Activated CD4-positive, alpha-beta T cell treated with anti-CD3 and anti-CD28 coated beads for 36 hours (primary cell): ENCODE measurements at regions of chr6 and their contacts with region 1.

Region 1: GRCh38 chr6:107977283-107977682 is 19.3 kb upstream of the SEC63 start:
- DNase-seq: no peak
- ATAC-seq: no peak
- H3K4me3 Mint-ChIP-seq: no peak overlapping the region
- H3K27ac Mint-ChIP-seq: no peak overlapping the region
- H3K4me1 Mint-ChIP-seq: no peaks in the 10 kb centered on the region
- H3K27me3 Mint-ChIP-seq: no peaks in the 10 kb centered on the region

Region 2: GRCh38 chr6:108526739-108527174 is 549.5 kb after region 1 on chr6:
- CTCF ChIA-PET with region 1: interaction called, 3 read pairs
- POLR2A ChIA-PET with region 1: no interaction called
- intact Hi-C with region 1: loop called (anchors 2 to 10 kb)
- DNase-seq: no peak
- ATAC-seq: no peak
- H3K4me3 Mint-ChIP-seq: no peak overlapping the region
- H3K27ac Mint-ChIP-seq: no peak overlapping the region
- H3K4me1 Mint-ChIP-seq: no peaks in the 10 kb centered on the region
- H3K27me3 Mint-ChIP-seq: no peaks in the 10 kb centered on the region